OCI-LY7 (cell line): ENCODE measurements at regions of chr3 and their contacts with region 1.

Region 1: DNA sequence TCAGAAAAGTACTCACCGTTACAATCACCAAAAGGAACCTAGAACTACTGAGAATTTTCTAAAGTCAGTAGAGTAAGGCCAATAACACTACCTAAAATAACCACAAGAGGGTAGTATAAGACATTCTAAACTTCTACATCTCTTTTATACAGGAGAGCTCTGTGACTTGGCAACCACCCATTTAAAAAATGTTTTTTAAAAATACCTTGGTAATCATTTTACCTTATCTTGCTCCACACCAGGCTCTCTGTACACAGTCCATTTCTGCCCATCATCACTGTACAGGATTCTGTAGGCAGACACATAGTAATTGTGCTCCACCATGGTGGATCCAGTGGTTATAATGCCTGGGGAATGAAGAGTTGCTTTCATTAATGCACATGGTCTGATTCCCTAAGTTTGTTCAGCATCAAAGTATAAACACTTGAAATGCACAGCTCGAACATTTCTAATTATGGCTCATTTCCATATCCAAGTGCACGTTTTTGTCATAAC is 54.5 kb downstream of the ST3GAL6 start:
- DNase-seq: peak; percentile 69
- H3K4me3 ChIP-seq: no peak overlapping the region
- H3K27ac ChIP-seq: no peak overlapping the region
- H3K4me1 ChIP-seq: no peaks in the 10 kb centered on the region
- CTCF ChIP-seq: peak; percentile 90

Region 2: GRCh38 chr3:98039322-98040024 is 778.1 kb before region 1 on chr3:
- CTCF ChIA-PET with region 1: no interaction called
- POLR2A ChIA-PET with region 1: no interaction called
- intact Hi-C with region 1: loop called (anchors 10 kb)
- DNase-seq: peak; percentile 81
- H3K4me3 ChIP-seq: peak overlapping the region; percentile 63
- H3K27ac ChIP-seq: no peak overlapping the region
- H3K4me1 ChIP-seq: no peaks in the 10 kb centered on the region
- CTCF ChIP-seq: peak; percentile 98

Region 3: GRCh38 chr3:98801043-98801747 is 16.4 kb before region 1 on chr3:
- CTCF ChIA-PET with region 1: no interaction called
- POLR2A ChIA-PET with region 1: no interaction called
- intact Hi-C with region 1: no loop called
- DNase-seq: no peak
- H3K4me3 ChIP-seq: no peak overlapping the region
- H3K27ac ChIP-seq: no peak overlapping the region
- H3K4me1 ChIP-seq: no peaks in the 10 kb centered on the region
- CTCF ChIP-seq: peak; percentile 39; the same call in 1 of the 2 replicates

Region 4: DNA sequence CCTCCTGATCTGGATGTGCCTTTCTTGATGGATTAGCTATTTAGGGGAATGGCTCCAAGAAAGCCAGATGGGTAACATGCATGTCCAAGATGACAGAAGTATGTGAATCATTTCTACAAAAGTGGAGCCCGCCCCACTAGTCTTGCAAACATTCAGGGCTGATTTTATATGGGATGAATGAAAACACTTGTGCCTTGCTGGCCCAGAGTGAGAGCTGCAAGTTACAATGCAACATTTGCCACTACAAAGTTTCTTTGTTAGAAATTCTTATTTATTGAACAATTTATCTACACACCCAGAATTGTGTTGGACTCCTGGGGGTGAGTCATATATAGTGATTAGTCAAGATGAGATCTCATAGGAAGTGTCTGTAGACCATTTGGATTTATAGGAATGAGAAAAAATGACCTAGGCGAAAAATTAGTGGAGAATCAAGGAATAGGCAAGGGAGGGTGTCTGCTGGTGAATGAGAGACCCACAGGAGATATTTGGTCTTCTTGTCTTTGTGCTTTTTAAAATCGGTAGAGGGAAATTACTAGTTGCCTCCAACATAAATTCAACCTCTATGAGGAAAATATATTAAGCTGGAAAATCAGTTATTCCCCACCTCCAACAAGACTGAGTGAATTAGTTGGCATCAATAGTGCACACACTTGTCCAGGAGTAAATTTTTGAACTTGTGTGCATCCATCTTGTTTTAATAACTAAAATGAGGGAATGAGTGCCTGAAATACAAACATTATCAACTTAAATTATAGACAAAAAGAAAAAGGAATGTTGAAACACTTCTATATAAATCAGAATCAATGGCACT is 137.4 kb after region 1 on chr3:
- CTCF ChIA-PET with region 1: no interaction called
- POLR2A ChIA-PET with region 1: no interaction called
- intact Hi-C with region 1: no loop called
- DNase-seq: no peak
- H3K4me3 ChIP-seq: no peak overlapping the region
- H3K27ac ChIP-seq: no peak overlapping the region
- H3K4me1 ChIP-seq: no peaks in the 10 kb centered on the region
- CTCF ChIP-seq: no peak

Region 5: DNA sequence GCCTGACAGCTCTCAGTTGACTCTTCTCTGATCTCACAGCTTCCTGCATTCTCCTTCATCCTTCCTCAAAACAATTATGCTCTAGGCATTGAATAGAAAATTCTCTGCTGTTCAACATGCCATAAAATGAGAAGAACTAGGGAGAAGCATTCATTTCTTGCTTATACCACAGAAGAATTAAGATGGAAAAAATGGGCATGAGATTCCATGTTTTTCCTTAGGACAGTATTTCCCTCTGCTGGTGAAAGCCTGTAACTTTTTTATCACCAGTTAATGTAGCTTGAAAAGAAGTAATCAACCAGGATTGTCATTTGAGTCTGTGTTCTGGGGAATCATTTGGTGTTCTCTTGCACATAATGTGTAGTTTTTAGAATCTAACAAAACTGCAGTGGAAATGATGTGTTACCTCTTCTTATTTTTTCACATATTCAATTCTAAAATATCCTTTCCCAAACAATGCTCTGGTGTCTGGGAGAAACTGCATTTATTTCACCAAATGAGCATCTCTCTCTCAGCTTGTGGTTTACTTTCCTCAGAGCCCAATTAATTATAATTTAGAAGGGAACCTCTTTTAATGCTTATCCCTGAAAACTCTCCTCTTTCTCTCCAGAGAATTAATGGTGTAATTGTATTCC is 176.7 kb after region 1 on chr3:
- CTCF ChIA-PET with region 1: no interaction called
- POLR2A ChIA-PET with region 1: no interaction called
- intact Hi-C with region 1: loop called (anchors 5 kb)
- DNase-seq: no peak
- H3K4me3 ChIP-seq: no peak overlapping the region
- H3K27ac ChIP-seq: no peak overlapping the region
- H3K4me1 ChIP-seq: peaks cover 19% of the 10 kb centered on the region
- CTCF ChIP-seq: peak; percentile 69

Region 6: DNA sequence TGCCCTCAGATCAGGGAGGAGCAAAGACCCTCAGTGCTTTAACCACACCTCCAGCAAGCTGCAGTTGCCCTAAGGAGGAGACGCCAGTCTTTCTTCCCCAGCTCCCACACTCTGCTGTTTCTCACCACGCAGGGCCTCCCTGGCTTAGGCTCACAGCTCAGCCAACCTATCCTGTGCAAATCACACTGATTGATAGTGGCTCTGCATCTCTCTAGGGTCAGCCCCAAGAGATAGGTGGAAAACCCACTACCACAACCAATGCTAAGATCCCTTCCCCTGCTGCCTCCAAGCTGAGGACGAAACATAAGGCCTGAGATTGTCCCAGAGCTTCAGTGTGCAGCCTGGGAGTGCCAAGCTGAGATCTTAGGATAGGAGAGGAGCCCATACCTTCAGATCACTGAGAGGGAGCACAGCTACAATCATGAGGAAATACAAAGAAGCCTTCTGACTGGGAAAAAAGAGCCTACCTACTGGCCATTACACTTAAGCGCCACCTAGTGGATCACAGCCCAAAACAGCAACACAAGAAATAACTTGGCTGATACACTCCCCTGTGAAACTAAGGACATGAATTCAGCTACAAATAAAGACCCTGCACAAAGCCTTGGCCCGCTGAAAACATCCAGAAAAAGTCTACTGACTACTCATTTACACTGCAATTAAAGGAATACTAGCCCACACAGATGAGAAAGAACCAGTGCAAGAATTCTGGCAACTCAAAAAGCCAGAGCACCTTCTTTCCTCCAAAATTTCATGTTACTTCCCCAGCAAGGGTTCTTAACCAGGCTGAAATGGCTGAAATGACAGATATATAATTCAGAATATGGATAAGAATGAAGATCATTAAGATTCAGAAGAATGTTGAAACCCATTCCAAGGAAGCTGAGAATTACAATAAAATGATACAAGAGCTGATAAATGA is 355.4 kb after region 1 on chr3:
- CTCF ChIA-PET with region 1: interaction called, 4 read pairs
- POLR2A ChIA-PET with region 1: no interaction called
- intact Hi-C with region 1: loop called (anchors 1 kb)
- DNase-seq: peak; percentile 80
- H3K4me3 ChIP-seq: no peak overlapping the region
- H3K27ac ChIP-seq: no peak overlapping the region
- H3K4me1 ChIP-seq: no peaks in the 10 kb centered on the region
- CTCF ChIP-seq: peak; percentile 92

Region 7: DNA sequence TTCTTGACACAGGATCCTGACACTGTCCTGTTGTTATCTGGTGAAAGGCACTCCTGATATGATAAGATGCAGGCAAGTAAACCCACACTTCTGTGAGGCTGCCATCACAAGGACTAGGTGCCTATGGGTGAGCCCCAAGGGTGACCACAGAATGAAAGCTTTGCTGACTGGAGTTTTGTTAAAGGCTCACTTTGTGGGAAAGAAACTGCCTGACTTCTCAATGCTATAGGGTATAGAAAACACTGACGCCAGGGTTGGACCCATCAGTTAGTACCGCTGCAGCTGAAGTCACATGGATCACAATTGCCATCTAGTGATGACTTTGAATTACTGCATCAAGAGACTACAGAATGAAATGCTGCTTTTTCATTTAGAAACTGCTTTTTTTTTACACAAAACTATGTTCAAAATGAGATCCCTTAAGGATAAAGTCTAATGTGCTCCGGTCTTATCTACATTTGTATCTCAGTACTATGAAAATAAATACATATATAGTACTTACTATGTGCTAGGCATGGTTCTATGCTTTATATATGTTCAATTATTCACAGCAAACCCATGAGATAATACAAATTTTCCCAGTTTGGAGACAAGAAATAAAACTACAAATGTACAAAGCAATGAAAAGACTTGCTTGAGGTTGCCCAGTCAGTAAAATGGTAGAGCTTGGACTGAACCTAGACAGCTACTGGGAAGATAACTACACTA is 935.8 kb after region 1 on chr3:
- CTCF ChIA-PET with region 1: no interaction called
- POLR2A ChIA-PET with region 1: interaction called, 3 read pairs
- intact Hi-C with region 1: loop called (anchors 5 kb)
- DNase-seq: peak; percentile 48
- H3K4me3 ChIP-seq: no peak overlapping the region
- H3K27ac ChIP-seq: no peak overlapping the region
- H3K4me1 ChIP-seq: no peaks in the 10 kb centered on the region
- CTCF ChIP-seq: peak; percentile 85